Sciatic nerve (tissue), 2 donors: ENCODE measurements at regions of chr14 and their contacts with region 1.

Region 1: GRCh38 chr14:74109369-74109768 is 24.6 kb downstream of the LIN52 start:
- DNase-seq: no peak
- ATAC-seq: peak; percentile 76

Region 2: DNA sequence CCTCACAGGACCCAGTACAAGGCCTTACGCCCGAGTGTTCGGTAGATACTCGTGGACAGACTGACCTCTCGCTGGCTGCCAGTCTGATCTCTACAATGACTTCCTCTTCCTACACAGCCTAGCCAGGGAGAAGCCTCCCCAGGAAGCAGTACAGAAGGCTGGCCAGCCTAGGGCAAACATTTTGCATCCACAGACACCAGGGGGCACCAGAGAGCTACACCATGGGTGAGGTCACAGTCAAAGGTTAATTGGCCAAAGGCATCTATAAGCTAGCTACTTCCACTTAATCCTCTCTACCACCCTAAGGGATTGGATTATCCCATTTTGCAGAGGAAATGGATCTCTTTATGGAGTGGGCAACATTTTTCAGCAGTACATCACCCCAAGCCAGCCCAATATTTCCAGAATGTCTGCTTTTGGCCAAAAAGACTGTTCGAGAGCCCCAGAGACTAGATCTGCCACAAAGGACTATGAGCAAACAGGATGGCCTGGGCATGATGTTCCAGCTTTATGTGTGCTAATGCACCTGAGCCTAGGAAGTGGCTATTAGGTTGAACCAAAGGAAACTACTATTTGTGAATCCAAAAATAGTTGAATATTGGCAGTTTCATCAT is 380.5 kb before region 1 on chr14:
- intact Hi-C with region 1: no loop called
- DNase-seq: peak; percentile 94
- ATAC-seq: peak; percentile 71

Region 3: GRCh38 chr14:74035556-74035955 is 73.8 kb before region 1 on chr14:
- intact Hi-C with region 1: no loop called
- DNase-seq: no peak
- ATAC-seq: no peak

Region 4: GRCh38 chr14:74048281-74048680 is 61.1 kb before region 1 on chr14:
- intact Hi-C with region 1: loop called (anchors 2 kb)
- DNase-seq: no peak
- ATAC-seq: no peak

Region 5: DNA sequence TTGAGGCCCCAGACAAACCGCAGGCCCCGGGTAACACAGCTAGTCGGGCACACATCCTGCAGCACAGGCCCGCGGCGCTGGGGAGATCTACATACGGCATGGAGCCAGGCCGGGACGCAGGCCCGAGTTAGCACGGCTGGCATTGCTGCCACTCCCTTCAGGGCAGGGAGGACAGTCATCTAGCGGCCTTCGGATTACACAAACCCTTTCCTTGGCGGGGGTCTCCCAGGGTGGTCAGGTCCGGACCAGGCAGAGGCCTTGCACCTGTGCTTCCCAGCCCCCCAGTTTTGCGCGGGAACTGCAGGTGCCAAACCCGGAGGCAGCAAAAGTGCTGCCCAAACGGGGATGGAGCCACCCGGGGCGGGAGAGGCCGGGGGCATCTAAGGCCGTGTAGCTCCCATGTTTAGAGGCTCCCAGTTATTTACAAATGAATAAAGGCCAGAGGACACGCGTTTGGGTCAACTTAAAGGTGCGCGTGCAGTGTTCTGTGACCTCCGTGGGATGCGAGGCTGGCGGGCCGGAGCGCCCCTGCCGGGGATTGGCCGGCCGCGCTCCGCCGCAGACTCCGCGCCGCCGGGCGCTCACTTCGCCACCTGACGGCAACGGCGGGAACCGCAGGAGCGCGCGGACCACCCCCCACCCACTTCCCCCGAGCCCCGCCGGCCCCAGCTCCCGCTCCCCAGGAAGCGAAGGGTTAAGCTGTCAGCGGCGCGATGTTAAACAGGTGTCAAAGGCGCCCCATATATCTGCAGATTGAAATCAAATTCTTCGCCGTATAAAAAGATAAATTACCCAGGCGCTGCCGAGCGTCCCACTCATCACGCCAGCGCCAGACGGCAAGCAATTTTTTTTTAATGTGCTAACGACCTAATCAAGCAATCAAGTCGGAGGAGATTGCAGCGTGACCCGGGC is 148.0 kb after region 1 on chr14:
- intact Hi-C with region 1: loop called (anchors 10 kb)
- DNase-seq: no peak
- ATAC-seq: peak; percentile 79

Region 6: GRCh38 chr14:74267588-74267987 is 158.2 kb after region 1 on chr14:
- intact Hi-C with region 1: no loop called
- DNase-seq: no peak
- ATAC-seq: no peak